ACHN (cell line): ENCODE measurements at regions of chr12 and their contacts with region 1.

Region 1: DNA sequence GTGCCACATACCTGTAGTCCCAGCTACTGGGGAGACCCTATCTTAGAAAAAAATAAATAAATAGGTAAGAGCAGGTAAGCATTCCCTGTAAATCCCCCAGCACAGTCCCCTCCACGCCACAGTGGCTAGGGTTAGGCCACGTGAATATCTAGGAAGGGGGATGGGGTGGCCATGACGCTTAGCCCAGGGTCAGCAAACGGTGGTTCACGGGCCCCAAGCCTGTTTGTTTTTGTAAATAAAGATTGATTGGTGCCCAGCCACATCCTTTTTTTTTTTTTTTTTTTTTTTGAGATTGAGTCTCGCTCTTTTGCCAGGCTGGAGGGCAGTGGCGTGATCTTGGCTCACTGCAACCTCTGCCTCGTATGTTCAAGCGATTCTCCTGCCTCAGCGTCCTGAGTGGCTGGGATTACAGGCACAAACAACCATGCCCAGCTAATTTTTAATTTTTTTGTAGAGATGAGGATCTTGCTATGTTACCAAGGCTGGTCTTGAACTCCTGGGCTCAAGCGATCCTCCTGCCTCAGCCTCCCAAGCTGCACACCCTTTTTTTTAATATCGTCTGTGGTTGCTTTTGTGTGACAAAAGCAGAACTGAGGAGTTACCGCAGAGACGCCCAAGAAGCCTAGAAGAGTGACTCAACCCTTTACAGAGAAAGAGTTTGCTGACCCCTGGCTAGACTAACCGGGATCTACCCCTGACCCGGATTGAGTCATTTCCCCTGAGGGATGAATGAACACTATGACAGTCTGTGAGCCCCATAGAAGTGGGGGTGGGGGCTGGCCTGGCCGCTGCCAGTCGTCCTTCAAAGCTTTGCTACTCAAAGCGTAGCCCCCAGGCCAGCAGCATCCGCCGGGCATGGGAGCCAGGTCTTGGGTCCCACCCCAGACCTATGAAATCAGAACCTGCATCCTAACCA is 113.7 kb upstream of the NCOR2 start:
- DNase-seq: peak; percentile 93

Region 2: GRCh38 chr12:124734224-124734788 is 53.2 kb after region 1 on chr12:
- in situ Hi-C with region 1: loop called (anchors 10 kb)
- DNase-seq: no peak